PC-3 (cell line): ENCODE measurements at regions of chr7 and their contacts with region 1.

Region 1: GRCh38 chr7:12403287-12404181 is at the start of gene VWDE:
- DNase-seq: peak; percentile 80
- ATAC-seq: peak; percentile 89
- H3K4me3 ChIP-seq: peak within 1 kb of the TSS; percentile 96
- H3K27ac ChIP-seq: peak within 1 kb of the TSS; percentile 65
- H3K4me1 ChIP-seq: peaks cover 24% of the 10 kb centered on the region
- H3K27me3 ChIP-seq: no peaks in the 10 kb centered on the region
- CTCF ChIP-seq: no peak
- total RNA-seq, gene VWDE: 5.5 and 7.7 TPM in 2 replicates

Region 2: DNA sequence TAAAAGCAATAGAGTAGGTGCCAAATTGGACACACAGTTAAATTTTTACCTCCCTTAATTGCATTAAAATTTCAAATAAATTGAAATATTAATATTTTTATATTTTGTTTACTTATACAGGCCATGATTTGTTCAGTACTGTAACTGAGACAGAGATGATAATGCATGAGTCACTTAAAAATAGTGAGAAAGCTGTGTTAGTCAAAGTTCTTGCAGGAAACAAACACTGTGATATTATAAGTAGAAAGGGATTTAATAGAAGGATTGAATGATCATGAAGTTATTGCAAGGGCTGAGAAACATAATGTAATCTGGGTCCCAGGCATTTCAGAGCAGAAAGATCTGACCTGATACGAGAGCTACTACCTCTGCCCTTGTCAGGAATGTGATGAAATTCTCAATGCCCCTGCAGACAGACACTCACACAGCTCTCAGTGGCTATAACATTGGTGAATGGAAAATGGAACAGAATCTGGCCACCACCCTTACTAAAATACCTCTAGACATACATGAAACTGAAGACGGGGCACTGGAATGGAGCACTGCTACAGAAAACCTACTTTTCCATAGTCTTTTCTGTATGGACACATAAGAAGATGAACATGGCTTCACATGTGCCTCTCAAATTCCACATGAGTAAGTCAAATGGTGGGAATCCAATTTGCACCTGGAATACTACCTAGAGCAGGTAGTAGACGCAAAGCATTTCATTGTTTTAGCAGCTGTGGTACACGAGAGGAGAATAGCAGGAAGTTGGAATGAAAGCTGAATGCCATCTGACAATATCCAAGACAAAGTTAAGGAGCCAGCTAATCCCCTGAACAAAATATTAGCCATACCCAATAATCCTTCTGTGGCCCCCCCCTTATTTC is 19.2 kb after region 1 on chr7:
- CTCF ChIA-PET with region 1: no interaction called
- POLR2A ChIA-PET with region 1: no interaction called
- intact Hi-C with region 1: loop called (anchors 1 kb)
- DNase-seq: peak; percentile 64
- ATAC-seq: peak; percentile 89
- H3K4me3 ChIP-seq: peak overlapping the region; percentile 36
- H3K27ac ChIP-seq: peak overlapping the region; percentile 95
- H3K4me1 ChIP-seq: peaks cover 43% of the 10 kb centered on the region
- H3K27me3 ChIP-seq: no peaks in the 10 kb centered on the region
- CTCF ChIP-seq: no peak

Region 3: GRCh38 chr7:12540850-12541249 is 137.3 kb after region 1 on chr7:
- CTCF ChIA-PET with region 1: no interaction called
- POLR2A ChIA-PET with region 1: no interaction called
- intact Hi-C with region 1: no loop called
- DNase-seq: no peak
- ATAC-seq: no peak
- H3K4me3 ChIP-seq: no peak overlapping the region
- H3K27ac ChIP-seq: no peak overlapping the region
- H3K4me1 ChIP-seq: peaks cover 14% of the 10 kb centered on the region
- H3K27me3 ChIP-seq: no peaks in the 10 kb centered on the region
- CTCF ChIP-seq: no peak